T-cell (primary cell): ENCODE measurements at regions of chr4 and their contacts with region 1.

Region 1: GRCh38 chr4:54217642-54218495 is 11.2 kb upstream of the PDGFRA start:
- DNase-seq: peak in 31 of 35 experiments; percentile 9 to 78 (median 39)
- ATAC-seq: peak; percentile 60 to 72 (median 66)
- H3K4me3 ChIP-seq: peak overlapping the region in 1 of 2 donors; percentile 39
- H3K4me3 Mint-ChIP-seq: peak overlapping the region in 1 of 3 donors; percentile 5
- H3K27ac ChIP-seq: no peak overlapping the region
- H3K27ac Mint-ChIP-seq: no peak overlapping the region
- H3K4me1 ChIP-seq: peaks cover 0 to 5% of the 10 kb centered on the region in 2 experiments
- H3K4me1 Mint-ChIP-seq: peaks cover 4 to 6% (median 6%) of the 10 kb centered on the region in 3 donors
- H3K27me3 ChIP-seq: peaks cover 10 to 29% of the 10 kb centered on the region in 2 experiments
- H3K27me3 Mint-ChIP-seq: peaks cover 25 to 38% of the 10 kb centered on the region in 2 donors

Region 2: DNA sequence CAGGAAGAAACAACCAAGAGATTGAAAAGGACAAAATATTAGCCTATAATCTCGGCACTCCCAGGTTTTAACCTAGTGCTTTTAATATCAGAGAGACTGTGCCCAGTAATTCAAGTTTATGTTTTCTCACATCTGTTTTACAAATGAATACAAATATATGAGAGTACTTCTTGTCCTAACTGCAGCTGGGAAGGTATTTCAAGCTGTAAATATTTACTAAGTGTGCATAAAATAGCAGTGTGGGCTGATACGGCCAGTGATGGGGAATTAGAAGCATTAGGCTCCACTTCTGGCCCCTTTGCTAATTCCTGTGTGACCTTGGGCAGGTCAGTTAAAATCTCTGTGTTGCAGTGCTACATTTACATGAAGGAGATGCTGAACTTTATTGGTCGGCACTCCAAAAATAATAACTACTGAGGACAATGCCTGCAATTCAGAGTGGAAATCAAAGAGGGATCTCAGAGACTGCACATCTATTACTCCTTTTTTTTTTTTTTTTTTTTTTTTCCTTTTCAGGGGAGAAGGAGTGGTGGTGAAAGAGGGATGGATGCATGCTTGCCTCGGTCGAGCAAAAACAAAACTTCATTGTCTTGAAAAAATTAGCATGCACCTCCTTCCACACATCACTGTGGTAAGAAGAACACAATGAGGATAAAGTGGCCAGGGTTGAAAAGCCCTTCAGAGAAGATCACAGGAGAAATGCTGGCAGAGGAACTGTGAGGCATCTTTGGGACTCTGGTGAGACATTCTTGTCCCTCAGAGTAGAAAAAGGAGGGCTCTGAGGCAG is 582.0 kb before region 1 on chr4:
- CTCF ChIA-PET with region 1: no interaction called
- POLR2A ChIA-PET with region 1: interaction called in 1 of 2 experiments, 10 read pairs
- DNase-seq: no peak
- ATAC-seq: no peak
- H3K4me3 ChIP-seq: no peak overlapping the region
- H3K4me3 Mint-ChIP-seq: no peak overlapping the region
- H3K27ac ChIP-seq: no peak overlapping the region
- H3K27ac Mint-ChIP-seq: no peak overlapping the region
- H3K4me1 ChIP-seq: no peaks in the 10 kb centered on the region
- H3K4me1 Mint-ChIP-seq: no peaks in the 10 kb centered on the region
- H3K27me3 ChIP-seq: peaks cover 0 to 15% of the 10 kb centered on the region in 2 experiments
- H3K27me3 Mint-ChIP-seq: peaks cover 16 to 19% of the 10 kb centered on the region in 2 donors

Region 3: GRCh38 chr4:53929955-53930798 is 287.7 kb before region 1 on chr4:
- CTCF ChIA-PET with region 1: interaction called, 55 to 72 read pairs
- POLR2A ChIA-PET with region 1: no interaction called
- DNase-seq: peak in 34 of 35 experiments; percentile 6 to 77 (median 42)
- ATAC-seq: peak; percentile 50 to 66 (median 62)
- H3K4me3 ChIP-seq: no peak overlapping the region
- H3K4me3 Mint-ChIP-seq: no peak overlapping the region
- H3K27ac ChIP-seq: no peak overlapping the region
- H3K27ac Mint-ChIP-seq: no peak overlapping the region
- H3K4me1 ChIP-seq: no peaks in the 10 kb centered on the region
- H3K4me1 Mint-ChIP-seq: no peaks in the 10 kb centered on the region
- H3K27me3 ChIP-seq: no peaks in the 10 kb centered on the region
- H3K27me3 Mint-ChIP-seq: peaks cover 5 to 10% of the 10 kb centered on the region in 2 donors

Region 4: DNA sequence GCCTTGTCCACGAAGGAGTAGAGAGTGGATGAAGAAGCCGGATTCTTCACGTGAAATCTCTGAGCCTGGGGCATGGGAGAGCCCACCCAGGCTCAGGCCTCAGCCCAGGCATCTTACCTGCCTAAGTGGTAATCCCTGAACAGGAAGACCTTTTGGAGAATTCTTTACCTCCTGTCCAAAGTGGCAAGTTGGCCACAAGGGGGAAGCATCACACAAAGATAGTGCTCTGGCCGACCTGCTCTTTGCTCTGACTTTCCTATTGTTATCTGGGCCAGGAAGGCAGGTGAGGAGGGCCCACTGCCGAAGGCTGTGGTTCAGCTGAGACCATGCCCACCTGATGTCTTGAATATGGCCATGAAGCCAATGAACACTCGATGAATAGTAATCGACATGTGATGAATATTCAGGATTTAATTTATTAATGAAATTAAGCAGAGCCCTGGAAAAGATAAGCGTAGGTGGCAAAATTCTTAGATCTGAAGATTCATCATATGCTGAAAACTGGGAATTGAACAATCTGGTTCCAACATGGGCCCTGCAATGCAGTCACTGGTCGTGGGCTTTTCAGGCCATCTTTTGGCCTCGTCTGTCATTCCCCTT is 105.0 kb after region 1 on chr4:
- CTCF ChIA-PET with region 1: no interaction called
- POLR2A ChIA-PET with region 1: no interaction called
- DNase-seq: peak in 28 of 35 experiments; percentile 5 to 59 (median 20)
- ATAC-seq: peak in 3 of 4 experiments; percentile 19 to 65 (median 20)
- H3K4me3 ChIP-seq: no peak overlapping the region
- H3K4me3 Mint-ChIP-seq: no peak overlapping the region
- H3K27ac ChIP-seq: no peak overlapping the region
- H3K27ac Mint-ChIP-seq: no peak overlapping the region
- H3K4me1 ChIP-seq: no peaks in the 10 kb centered on the region
- H3K4me1 Mint-ChIP-seq: no peaks in the 10 kb centered on the region
- H3K27me3 ChIP-seq: no peaks in the 10 kb centered on the region
- H3K27me3 Mint-ChIP-seq: peaks cover 0 to 4% of the 10 kb centered on the region in 2 donors